H1 (cell line): ENCODE measurements at regions of chr2 and their contacts with region 1.

Region 1: DNA sequence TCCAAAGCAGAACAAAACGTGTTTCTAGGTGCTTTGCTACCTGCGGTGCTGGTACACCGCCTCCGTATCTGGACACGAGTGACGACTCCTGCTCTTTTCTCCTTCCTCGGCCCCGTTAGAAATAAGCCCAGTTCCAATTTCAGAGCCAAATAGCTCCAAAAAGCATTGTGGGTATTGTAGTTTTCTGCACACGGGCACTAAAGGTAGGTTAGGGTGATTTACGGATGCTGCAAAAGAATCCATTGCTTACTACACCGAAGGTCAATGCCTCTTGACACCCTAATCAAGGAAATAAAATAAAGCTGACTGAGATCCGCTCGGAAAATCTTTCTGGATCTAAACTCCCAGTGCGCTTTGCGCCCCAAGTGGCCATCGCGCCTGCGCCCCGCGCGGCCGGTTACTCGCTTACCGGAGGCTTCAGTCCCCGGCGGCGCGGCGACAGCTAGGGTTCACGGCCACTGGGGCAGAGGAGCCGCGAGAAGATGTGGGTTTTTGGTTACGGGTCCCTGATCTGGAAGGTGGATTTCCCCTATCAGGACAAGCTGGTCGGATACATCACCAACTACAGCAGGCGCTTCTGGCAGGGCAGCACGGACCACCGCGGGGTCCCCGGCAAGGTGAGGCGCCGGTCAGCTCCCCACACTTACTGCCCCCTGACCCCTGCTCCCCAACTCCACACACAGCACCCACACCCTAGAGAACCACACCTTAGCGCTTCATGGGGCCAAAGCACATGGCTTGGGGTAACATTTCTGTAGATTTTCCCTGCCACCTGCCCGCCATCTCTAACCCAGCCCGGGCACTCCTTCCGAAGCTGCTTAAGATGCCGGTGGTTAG is at the start of gene CHAC2:
- DNase-seq: peak in 1 of 2 experiments; percentile 89
- H3K4me3 ChIP-seq: peak within 1 kb of the TSS; percentile 68 to 91 (median 76)
- H3K27ac ChIP-seq: peak within 1 kb of the TSS; percentile 72
- H3K4me1 ChIP-seq: peaks cover 0 to 3% (median 0%) of the 10 kb centered on the region in 4 experiments; a peak in 1 of 7 replicates
- H3K27me3 ChIP-seq: no peaks in the 10 kb centered on the region
- CTCF ChIP-seq: peak in 2 of 3 experiments; percentile 12 to 24; a peak in 2 of 4 replicates
- EP300 ChIP-seq: no peak
- POLR2A ChIP-seq: peak; percentile 57 to 93
- RAD21 ChIP-seq: no peak
- total RNA-seq, gene CHAC2: 11.2 and 11.7 TPM in 2 replicates

Region 2: DNA sequence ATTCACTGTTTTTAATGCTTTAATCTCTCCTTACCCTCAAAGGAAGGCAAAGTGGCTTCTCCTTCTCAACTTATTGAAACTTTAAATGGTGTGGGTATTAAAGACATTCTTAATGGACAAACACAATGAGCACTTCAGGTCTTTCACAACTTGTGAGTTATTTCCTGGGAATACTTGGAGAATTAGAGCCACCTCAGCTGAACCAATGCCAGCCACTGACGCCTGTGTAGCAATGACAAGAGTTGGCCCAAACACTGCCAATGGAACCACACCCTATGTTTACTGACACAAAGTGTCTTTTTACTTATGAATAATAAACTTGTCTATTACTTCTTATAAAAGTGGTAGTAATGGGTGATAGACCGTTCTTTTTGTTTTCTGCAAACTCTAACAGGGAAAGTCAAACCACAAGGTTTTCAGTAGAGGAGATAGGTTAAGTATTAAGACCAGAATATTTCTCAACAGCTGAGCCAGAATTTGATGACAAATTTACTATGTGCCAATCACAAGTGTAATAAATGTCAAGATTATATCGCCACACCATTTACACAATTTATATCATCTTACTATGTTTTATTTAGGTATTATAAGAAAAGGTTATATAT is 12.5 kb before region 1 on chr2:
- CTCF ChIA-PET with region 1: interaction called, 7 read pairs
- POLR2A ChIA-PET with region 1: interaction called, 13 read pairs
- DNase-seq: no peak
- H3K4me3 ChIP-seq: no peak overlapping the region
- H3K27ac ChIP-seq: no peak overlapping the region
- H3K4me1 ChIP-seq: no peaks in the 10 kb centered on the region
- H3K27me3 ChIP-seq: no peaks in the 10 kb centered on the region
- CTCF ChIP-seq: no peak
- EP300 ChIP-seq: no peak
- POLR2A ChIP-seq: no peak
- RAD21 ChIP-seq: no peak

Region 3: DNA sequence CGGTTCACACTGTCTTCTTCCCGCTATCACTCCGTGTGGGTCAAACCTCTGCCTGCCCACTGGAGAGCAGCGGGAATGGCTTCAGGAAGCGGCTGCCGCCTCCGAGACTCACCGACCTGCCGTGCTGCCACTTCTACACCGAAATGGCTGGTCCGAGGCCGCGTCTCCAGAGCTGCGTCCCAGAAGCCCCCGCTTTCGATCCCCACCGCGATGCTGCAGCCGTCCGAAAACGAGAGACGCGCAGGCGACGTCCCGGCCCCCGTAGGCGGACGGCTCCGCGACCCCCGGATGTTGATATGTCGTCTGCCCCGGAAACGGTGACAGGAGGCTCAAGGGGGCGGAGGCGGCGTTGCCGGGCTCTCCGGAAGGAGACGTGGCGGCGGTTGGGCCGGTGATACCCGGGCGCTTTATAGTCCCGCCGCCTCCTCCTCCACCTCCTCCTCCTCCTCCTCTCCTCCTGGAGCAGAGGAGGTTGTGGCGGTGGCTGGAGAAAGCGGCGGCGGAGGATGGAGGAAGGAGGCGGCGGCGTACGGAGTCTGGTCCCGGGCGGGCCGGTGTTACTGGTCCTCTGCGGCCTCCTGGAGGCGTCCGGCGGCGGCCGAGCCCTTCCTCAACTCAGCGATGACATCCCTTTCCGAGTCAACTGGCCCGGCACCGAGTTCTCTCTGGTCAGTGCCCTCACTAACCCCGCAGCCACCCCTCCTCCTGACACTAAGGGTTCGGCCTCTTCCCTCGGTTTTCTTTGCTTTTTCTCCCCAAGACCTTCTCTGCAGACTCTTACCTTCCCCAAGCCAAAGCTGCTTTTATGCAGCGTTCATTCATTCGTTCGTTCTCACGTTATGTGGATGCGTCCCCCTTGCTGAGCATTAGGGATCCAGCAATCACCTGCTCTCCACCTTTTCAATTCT is 19.3 kb after region 1 on chr2 and contains the starts of genes ASB3 and ERLEC1:
- CTCF ChIA-PET with region 1: no interaction called
- POLR2A ChIA-PET with region 1: interaction called, 124 read pairs
- DNase-seq: peak; percentile 85 to 93
- H3K4me3 ChIP-seq: peak within 1 kb of the TSS; percentile 79 to 100 (median 98)
- H3K27ac ChIP-seq: peak within 1 kb of the TSS; percentile 94
- H3K4me1 ChIP-seq: peaks cover 0 to 14% (median 3%) of the 10 kb centered on the region in 4 experiments; a peak in 4 of 7 replicates
- H3K27me3 ChIP-seq: no peaks in the 10 kb centered on the region
- CTCF ChIP-seq: no peak
- EP300 ChIP-seq: 0 out of 3 replicates have a peak, but pooled peaks of 1 of the 2 experiments have one; percentile 4
- POLR2A ChIP-seq: peak; percentile 90 to 95
- RAD21 ChIP-seq: no peak
- total RNA-seq, gene ASB3: 25.4 and 29.8 TPM in 2 replicates
- total RNA-seq, gene ERLEC1: 23.8 and 26.7 TPM in 2 replicates